Endothelial cell of umbilical vein (primary cell): ENCODE measurements at regions of chr10 and their contacts with region 1.

Region 1: DNA sequence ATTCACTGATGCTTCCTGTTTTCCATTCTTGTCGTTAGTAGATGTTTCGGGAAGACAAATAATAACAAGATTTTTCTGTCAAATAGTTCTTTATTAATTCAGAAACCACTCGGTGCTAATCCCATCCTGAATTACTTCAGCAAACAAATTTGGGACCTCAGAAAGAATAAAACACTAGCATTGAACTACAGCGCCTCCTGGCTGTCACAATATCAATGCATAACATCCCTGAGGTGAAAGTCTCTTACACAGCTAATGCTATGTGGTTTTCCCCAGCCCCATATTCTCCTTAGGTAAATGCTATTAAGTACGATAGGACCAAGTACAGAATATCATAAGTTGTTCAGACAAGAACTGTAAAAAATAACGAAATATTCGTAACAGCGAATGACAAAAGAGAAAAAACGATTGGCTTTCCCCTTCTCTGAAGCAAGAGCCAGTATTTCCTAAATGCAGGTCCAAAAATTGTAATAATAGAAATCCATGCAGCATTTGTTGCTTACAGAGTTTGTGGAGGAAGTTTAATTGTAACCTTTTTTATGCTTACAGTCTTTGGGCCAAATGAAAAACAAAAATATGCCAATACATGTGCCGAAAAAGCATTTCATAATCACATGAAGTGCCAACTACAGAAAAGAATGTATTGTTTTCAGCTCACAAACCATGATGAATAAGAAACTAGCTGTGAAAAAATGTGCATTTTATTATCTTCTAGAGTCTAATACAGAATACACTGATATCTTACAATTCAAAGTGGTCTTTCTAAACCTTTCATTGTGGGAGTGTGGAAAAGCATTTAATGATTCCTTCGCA is 47.3 kb downstream of the MYPN start:
- DNase-seq: peak; percentile 74
- H3K4me3 ChIP-seq: no peak overlapping the region
- H3K27ac ChIP-seq: no peak overlapping the region
- H3K4me1 ChIP-seq: peaks cover 14% of the 10 kb centered on the region
- H3K27me3 ChIP-seq: no peaks in the 10 kb centered on the region
- CTCF ChIP-seq: peak; percentile 66 to 71
- POLR2A ChIP-seq: no peak

Region 2: GRCh38 chr10:67884313-67884841 is 272.2 kb before region 1 on chr10 and contains the start of gene SIRT1:
- CTCF ChIA-PET with region 1: interaction called, 3 read pairs
- POLR2A ChIA-PET with region 1: interaction called, 4 read pairs
- dilution Hi-C with region 1: no loop called
- intact Hi-C with region 1: loop called (anchors 2 kb)
- DNase-seq: peak; percentile 96
- H3K4me3 ChIP-seq: peak within 1 kb of the TSS; percentile 95 to 97 (median 96)
- H3K27ac ChIP-seq: peak within 1 kb of the TSS; percentile 68
- H3K4me1 ChIP-seq: peaks cover 11% of the 10 kb centered on the region
- H3K27me3 ChIP-seq: no peaks in the 10 kb centered on the region
- CTCF ChIP-seq: no peak
- POLR2A ChIP-seq: peak; percentile 96
- total RNA-seq, gene SIRT1: 14.8 and 15.1 TPM in 2 replicates

Region 3: DNA sequence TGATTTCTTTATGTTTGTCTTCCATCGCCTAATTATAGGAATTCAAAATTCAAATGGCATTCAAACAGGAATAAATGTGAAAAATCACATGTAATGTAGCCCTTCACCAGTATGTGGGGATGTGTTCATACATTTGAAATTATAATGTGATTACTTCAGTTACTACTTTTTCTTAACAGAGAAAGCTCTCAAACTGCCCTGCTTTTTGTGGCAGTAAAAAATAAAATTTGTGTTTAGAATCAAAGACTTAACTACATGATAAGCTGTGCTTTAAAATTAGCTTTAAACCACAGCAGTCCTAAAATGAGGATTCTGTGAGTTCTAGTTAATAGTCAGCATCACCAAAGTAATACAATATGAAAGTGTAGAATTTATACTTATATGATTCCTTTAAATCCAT is 73.7 kb before region 1 on chr10:
- CTCF ChIA-PET with region 1: interaction called, 185 read pairs
- POLR2A ChIA-PET with region 1: no interaction called
- dilution Hi-C with region 1: no loop called
- intact Hi-C with region 1: loop called (anchors 1 kb)
- DNase-seq: peak; percentile 52
- H3K4me3 ChIP-seq: no peak overlapping the region
- H3K27ac ChIP-seq: no peak overlapping the region
- H3K4me1 ChIP-seq: peaks cover 6% of the 10 kb centered on the region
- H3K27me3 ChIP-seq: no peaks in the 10 kb centered on the region
- CTCF ChIP-seq: peak in 1 of 2 donors; percentile 22
- POLR2A ChIP-seq: no peak

Region 4: GRCh38 chr10:68096913-68097503 is 59.6 kb before region 1 on chr10:
- CTCF ChIA-PET with region 1: interaction called, 10 read pairs
- POLR2A ChIA-PET with region 1: no interaction called
- dilution Hi-C with region 1: no loop called
- intact Hi-C with region 1: loop called (anchors 1 kb)
- DNase-seq: peak; percentile 89
- H3K4me3 ChIP-seq: no peak overlapping the region
- H3K27ac ChIP-seq: peak overlapping the region; percentile 42
- H3K4me1 ChIP-seq: peaks cover 27% of the 10 kb centered on the region
- H3K27me3 ChIP-seq: no peaks in the 10 kb centered on the region
- CTCF ChIP-seq: no peak
- POLR2A ChIP-seq: no peak